GM10248 (cell line): ENCODE measurements at regions of chr11 and their contacts with region 1.

Region 1: GRCh38 chr11:63032457-63032856 is 16.8 kb upstream of the SLC22A8 start:
- DNase-seq: no peak
- CTCF ChIP-seq: no peak

Region 2: GRCh38 chr11:63042596-63042995 is 10.1 kb after region 1 on chr11:
- CTCF ChIA-PET with region 1: interaction called, 10 read pairs
- POLR2A ChIA-PET with region 1: no interaction called
- DNase-seq: peak; percentile 8
- CTCF ChIP-seq: no peak

Region 3: GRCh38 chr11:63508009-63508408 is 475.6 kb after region 1 on chr11:
- CTCF ChIA-PET with region 1: no interaction called
- POLR2A ChIA-PET with region 1: no interaction called
- DNase-seq: peak; percentile 41
- CTCF ChIP-seq: peak; percentile 36